Vagina (tissue), 2 donors: ENCODE measurements at regions of chr11 and their contacts with region 1.

Region 1: DNA sequence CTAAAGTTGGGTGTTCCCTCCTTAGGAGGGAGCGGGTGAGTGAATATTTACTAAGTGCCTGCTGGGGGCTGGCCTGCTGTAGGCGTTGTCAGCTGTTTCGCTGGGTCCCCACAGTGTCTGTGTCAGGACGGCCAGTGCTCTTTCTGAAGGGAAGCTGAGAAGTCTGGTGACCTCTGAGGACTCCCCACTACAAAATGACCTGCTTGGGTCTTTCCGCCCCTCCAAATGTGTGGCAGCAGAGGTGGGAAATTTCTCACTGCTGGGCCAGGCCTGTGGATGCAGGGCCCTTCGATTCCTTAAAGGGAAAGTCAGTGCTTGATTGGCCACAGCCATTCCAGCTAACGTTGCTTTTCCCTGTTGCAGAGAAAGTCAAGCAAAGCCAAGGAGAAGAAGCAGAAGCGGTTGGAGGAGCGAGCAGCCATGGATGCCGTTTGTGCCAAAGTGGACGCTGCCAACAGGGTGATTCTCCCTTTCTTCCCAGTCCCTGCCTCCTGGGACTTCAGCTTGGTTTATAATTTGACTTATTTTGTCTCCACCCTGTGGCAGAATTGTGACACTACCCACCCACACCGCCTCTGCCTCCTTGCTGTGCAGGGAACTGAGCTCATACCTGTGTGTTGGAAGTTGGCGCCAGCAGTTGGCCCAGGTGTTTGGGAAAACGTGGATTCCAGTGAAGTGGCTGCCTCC is 6.8 kb downstream of the NAA40 start:
- DNase-seq: no peak
- H3K4me3 ChIP-seq: no peak overlapping the region
- H3K27ac ChIP-seq: peak overlapping the region; percentile 55
- H3K4me1 ChIP-seq: peaks cover 13% of the 10 kb centered on the region
- H3K27me3 ChIP-seq: no peaks in the 10 kb centered on the region
- CTCF ChIP-seq: peak; percentile 70 to 89 (median 87)
- POLR2A ChIP-seq: no peak

Region 2: GRCh38 chr11:63768237-63769043 is 177.2 kb before region 1 on chr11 and contains the start of gene ZFTA:
- intact Hi-C with region 1: loop called (anchors 10 kb)
- DNase-seq: no peak
- H3K4me3 ChIP-seq: peak within 1 kb of the TSS; percentile 62 to 98
- H3K27ac ChIP-seq: peak within 1 kb of the TSS; percentile 93
- H3K4me1 ChIP-seq: peaks cover 41% of the 10 kb centered on the region
- H3K27me3 ChIP-seq: no peaks in the 10 kb centered on the region
- CTCF ChIP-seq: peak in 1 of 3 experiments; percentile 62
- POLR2A ChIP-seq: no peak
- total RNA-seq, gene ZFTA: 13.0 TPM

Region 3: DNA sequence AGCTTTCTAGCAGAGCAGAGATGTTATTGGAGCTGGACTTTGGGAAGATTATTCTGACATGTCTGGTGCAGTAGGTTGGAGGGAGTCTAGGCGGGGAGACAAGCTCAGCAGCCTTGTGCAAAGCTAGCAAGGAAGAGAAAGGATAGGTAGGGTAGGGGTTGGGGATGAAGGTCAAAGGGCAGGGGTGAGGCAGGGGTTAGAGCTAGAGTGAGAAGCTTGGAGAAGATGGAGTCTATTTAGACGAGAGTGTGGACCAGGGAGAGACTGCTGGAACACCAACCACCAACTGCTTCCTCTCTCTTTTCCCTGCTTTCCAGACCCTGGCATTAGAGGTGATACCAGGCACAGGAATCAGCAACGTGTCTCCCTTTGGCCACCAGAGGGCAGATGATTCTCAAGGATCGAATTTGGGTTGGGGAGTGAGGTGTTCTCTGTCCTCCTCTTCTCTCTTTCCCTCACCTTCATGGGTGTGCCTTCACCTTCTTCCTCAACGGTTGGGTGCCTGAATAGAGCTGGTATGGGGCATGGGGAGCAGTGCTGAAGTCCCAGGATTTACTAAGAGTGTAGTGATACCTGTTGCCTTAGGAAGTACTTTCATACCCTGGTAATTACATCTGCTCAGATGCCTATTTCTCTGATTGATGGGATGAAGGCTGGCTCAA is 108.5 kb before region 1 on chr11:
- intact Hi-C with region 1: loop called (anchors 2 kb)
- DNase-seq: no peak
- H3K4me3 ChIP-seq: no peak overlapping the region
- H3K27ac ChIP-seq: peak overlapping the region; percentile 94
- H3K4me1 ChIP-seq: peaks cover 40% of the 10 kb centered on the region
- H3K27me3 ChIP-seq: no peaks in the 10 kb centered on the region
- CTCF ChIP-seq: peak; percentile 84 to 95 (median 89)
- POLR2A ChIP-seq: no peak

Region 4: DNA sequence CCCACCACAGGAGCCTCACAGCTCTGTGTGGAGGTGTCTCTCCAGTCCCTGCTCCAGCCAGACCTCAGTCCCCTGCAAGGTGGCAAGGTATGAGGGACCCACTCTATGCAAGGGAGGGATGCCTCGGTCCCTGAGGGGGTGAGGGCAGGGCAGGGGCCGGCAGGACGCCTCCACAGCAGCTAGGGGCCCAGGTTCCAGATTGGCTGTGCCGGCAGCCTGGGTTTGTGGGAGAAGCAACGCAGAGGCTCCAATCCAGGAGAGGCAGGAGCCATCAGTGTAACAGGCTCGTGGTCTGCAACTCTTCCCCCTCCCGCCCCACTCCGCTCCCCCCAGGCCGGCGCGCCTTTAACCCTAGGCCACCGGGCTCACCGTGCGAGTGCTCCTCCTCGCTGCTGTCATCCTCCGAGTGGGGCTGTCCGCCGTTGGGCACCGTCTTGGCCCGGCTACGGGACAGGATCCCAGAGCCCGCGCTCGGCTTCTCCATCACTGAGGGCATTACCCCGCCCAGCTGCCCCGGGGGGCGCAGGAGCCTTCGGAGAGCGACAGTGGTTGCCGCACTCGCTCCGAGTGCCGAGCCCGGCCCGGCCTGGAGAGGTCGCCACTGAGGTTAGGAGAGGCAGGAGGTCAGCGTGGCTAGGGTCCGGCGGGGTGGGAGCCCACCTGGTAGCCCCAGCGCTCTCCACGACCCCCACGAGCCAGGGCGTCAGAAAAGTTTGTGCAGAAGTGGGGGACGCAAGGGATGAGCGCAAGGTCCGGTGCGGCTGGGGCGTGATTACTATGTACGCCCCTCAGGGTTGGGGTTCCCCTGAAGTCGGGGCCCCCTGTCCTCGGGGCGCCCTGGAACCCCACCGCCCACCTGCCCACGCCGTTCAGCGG is 29.4 kb before region 1 on chr11:
- intact Hi-C with region 1: no loop called
- DNase-seq: no peak
- H3K4me3 ChIP-seq: peak overlapping the region; percentile 52 to 53
- H3K27ac ChIP-seq: no peak overlapping the region
- H3K4me1 ChIP-seq: peaks cover 56% of the 10 kb centered on the region
- H3K27me3 ChIP-seq: no peaks in the 10 kb centered on the region
- CTCF ChIP-seq: peak in 1 of 3 experiments; percentile 20
- POLR2A ChIP-seq: no peak